Dorsolateral prefrontal cortex (tissue), 120 donors: ENCODE measurements at regions of chr17 and their contacts with region 1.

Region 1: GRCh38 chr17:76408052-76408849 is 23.8 kb downstream of the SPHK1 start:
- DNase-seq: peak in 6 of 10 donors; percentile 42 to 86 (median 57)
- H3K4me3 ChIP-seq: no peak overlapping the region
- H3K27ac ChIP-seq: no peak overlapping the region
- H3K27me3 ChIP-seq: no peaks in the 10 kb centered on the region
- CTCF ChIP-seq: peak; percentile 48 to 77 (median 67)

Region 2: DNA sequence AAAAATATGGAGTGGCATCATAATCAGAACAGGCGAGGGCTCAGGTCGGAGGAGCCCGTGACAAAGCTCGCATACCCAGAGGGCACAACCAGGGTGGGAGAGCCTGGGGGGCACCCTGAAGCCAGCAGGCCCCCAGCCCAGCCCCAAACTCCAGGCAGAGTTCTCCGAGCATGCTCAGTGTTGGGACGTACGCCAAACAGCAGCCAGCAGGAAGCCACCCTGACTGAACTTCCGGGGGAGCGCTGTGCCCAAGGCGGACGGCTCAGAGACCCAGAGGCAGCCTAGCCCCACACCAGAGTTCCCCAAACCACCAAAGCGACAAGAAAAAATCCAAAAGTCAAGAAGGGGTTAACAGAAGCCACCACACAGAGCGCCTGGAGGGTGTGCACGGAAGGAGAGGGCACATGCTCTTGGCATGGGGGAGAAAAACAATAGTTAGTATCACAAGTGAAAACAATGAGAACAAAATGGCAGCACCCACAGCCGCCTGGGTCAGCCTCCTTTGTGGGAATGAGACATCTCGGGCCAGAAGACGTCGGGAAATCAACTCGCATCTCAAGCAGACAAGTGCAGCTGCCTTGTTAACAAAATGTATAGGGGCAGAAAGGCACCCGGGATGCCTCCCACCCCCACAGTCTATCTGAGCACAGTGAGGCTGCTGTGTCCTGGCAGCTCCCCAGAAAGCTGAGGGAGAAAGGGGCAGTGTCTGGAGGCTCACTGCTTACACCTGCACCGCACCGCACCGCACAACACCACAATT is 316.5 kb before region 1 on chr17:
- intact Hi-C with region 1: no loop called
- DNase-seq: no peak
- H3K4me3 ChIP-seq: peak overlapping the region in 4 of 59 donors; percentile 12 to 16 (median 16)
- H3K27ac ChIP-seq: peak overlapping the region in 28 of 59 donors; percentile 3 to 75 (median 45)
- H3K27me3 ChIP-seq: no peaks in the 10 kb centered on the region
- CTCF ChIP-seq: no peak

Region 3: GRCh38 chr17:76219670-76220383 is 188.4 kb before region 1 on chr17:
- intact Hi-C with region 1: no loop called
- DNase-seq: no peak
- H3K4me3 ChIP-seq: no peak overlapping the region
- H3K27ac ChIP-seq: no peak overlapping the region
- H3K27me3 ChIP-seq: no peaks in the 10 kb centered on the region
- CTCF ChIP-seq: no peak

Region 4: GRCh38 chr17:76365256-76365903 is 42.9 kb before region 1 on chr17:
- intact Hi-C with region 1: loop called in 1 of 2 experiments (anchors 5 kb)
- DNase-seq: no peak
- H3K4me3 ChIP-seq: no peak overlapping the region
- H3K27ac ChIP-seq: no peak overlapping the region
- H3K27me3 ChIP-seq: no peaks in the 10 kb centered on the region
- CTCF ChIP-seq: peak in 38 of 56 donors; percentile 7 to 52 (median 27)

Region 5: GRCh38 chr17:76458580-76459490 is 50.6 kb after region 1 on chr17:
- intact Hi-C with region 1: loop called in 1 of 2 experiments (anchors 5 kb)
- DNase-seq: no peak
- H3K4me3 ChIP-seq: no peak overlapping the region
- H3K27ac ChIP-seq: no peak overlapping the region
- H3K27me3 ChIP-seq: no peaks in the 10 kb centered on the region
- CTCF ChIP-seq: peak in 27 of 56 donors; percentile 9 to 40 (median 21)

Region 6: DNA sequence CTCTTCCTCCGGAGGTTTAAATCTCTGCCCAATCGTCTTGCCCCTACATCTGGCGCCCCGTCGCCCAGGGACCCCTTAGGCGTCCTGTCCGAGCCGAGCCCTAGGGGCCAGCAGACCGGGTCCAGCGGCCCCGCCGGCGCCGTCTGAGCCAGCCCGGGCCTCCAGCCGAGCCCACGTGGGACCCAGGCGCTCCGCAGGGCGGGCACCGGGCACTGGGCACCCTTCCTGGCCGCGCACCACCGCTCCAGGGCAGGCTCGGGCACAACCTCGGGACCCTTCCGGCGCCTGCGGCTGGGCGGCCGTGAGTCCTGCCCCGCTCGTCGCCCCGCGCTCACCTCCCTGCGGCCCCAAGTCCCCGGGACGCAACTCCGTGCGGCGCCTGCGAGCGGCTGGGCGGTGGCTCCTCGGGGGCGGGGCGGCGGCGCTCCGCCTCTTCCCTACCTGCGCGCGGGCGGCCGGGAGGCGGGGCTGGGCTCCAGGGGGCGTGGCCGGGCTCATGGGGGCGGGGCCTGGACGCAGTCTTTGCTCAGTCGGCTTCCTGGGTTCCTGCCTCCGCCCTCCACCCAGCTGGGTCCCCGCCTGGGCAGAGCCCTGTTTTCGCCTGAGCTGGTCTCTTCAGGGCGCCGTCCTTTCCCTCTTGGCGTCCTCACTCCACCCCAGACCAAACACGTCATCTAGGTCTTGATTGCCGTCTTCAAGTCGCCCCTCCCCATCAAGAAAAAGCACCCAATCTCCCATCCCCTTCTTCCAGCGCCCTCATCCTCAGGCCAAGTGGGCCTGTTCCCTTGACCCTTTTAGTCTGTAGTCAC is 93.0 kb after region 1 on chr17 and contains the start of gene RHBDF2:
- intact Hi-C with region 1: loop called (anchors 2 to 5 kb)
- DNase-seq: peak in 9 of 10 donors; percentile 58 to 87 (median 72)
- H3K4me3 ChIP-seq: peak within 1 kb of the TSS; percentile 35 to 76 (median 62)
- H3K27ac ChIP-seq: peak within 1 kb of the TSS in 56 of 59 donors; percentile 18 to 94 (median 79)
- H3K27me3 ChIP-seq: no peaks in the 10 kb centered on the region
- CTCF ChIP-seq: peak in 1 of 56 donors; percentile 7
- total RNA-seq, gene RHBDF2: 7.0 to 64.1 (median 28.9) TPM

Region 7: DNA sequence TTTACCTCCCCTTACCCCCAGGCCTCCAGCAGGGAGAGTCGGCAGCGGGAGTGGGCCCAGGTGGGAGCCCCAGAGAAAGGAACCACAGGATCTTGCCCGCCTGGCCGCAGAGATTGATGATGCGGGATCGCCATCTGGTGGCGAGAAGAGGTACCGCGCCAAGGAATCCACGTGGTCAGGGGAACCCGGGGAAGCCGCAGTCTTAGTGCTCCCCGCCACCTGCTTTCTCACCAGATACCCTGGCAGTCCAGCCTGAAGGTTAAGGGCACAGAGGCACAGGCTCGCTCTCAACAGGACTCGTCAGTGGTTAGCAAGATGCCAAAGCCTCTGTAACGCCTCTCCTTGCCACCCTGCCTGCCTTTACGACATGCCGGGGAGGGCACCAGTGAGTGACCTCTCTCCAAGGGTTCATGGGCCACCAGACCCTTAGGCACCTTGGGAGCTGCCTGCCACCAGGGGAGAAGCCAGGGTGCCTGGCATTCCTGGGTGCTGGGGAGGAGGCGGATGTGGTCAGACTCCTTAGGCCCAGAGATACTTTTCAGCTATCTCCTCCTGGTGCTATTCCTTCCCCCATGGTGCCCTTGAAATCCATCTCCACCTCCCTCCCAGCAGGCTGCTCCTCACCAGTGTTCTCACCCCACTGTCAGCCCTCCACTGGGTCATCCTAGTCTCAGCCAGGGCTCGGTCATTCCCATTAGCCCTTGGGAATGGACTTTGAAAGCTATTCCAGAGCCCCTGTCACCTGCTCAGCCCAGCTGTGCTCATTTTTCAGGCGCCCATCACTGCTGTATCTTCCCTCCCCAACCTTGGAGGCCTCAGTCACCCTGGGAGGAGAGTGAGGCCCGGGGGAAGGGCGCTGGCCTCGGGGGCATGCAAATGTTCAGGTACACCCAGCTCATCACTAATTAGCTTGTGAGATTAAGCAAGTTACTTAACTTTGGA is 98.4 kb after region 1 on chr17:
- intact Hi-C with region 1: loop called (anchors 2 to 5 kb)
- DNase-seq: peak; percentile 74 to 92 (median 84)
- H3K4me3 ChIP-seq: peak overlapping the region in 1 of 59 donors; percentile 24
- H3K27ac ChIP-seq: no peak overlapping the region
- H3K27me3 ChIP-seq: peaks cover 0 to 3% (median 0%) of the 10 kb centered on the region in 45 donors
- CTCF ChIP-seq: peak; percentile 81 to 99 (median 98)